Caco-2 (cell line): ENCODE measurements at regions of chr6 and their contacts with region 1.

Region 1: GRCh38 chr6:90302322-90302721 is 5.7 kb upstream of the BACH2 start:
- DNase-seq: no peak
- H3K4me3 ChIP-seq: no peak overlapping the region
- H3K4me3 Mint-ChIP-seq: no peak overlapping the region
- H3K27ac Mint-ChIP-seq: no peak overlapping the region
- H3K4me1 ChIP-seq: no peaks in the 10 kb centered on the region
- H3K4me1 Mint-ChIP-seq: peaks cover 10% of the 10 kb centered on the region
- H3K27me3 ChIP-seq: no peaks in the 10 kb centered on the region; the same call in none of the 2 replicates
- H3K27me3 Mint-ChIP-seq: peaks cover 27% of the 10 kb centered on the region
- CTCF ChIP-seq: peak in 1 of 2 experiments; percentile 47

Region 2: GRCh38 chr6:89970609-89971337 is 331.5 kb before region 1 on chr6:
- CTCF ChIA-PET with region 1: no interaction called
- POLR2A ChIA-PET with region 1: no interaction called
- intact Hi-C with region 1: loop called (anchors 1 kb)
- DNase-seq: peak in 1 of 2 experiments; percentile 54
- H3K4me3 ChIP-seq: no peak overlapping the region
- H3K4me3 Mint-ChIP-seq: no peak overlapping the region
- H3K27ac Mint-ChIP-seq: no peak overlapping the region
- H3K4me1 ChIP-seq: no peaks in the 10 kb centered on the region
- H3K4me1 Mint-ChIP-seq: no peaks in the 10 kb centered on the region
- H3K27me3 ChIP-seq: no peaks in the 10 kb centered on the region
- H3K27me3 Mint-ChIP-seq: peaks cover 13% of the 10 kb centered on the region
- CTCF ChIP-seq: peak; percentile 33 to 59

Region 3: GRCh38 chr6:90285611-90286381 is 16.5 kb before region 1 on chr6:
- CTCF ChIA-PET with region 1: no interaction called
- POLR2A ChIA-PET with region 1: no interaction called
- intact Hi-C with region 1: no loop called
- DNase-seq: peak; percentile 17 to 33
- H3K4me3 ChIP-seq: no peak overlapping the region
- H3K4me3 Mint-ChIP-seq: no peak overlapping the region
- H3K27ac Mint-ChIP-seq: no peak overlapping the region
- H3K4me1 ChIP-seq: 0 out of 2 replicates have a peak, but pooled peaks cover 3% of the 10 kb centered on the region
- H3K4me1 Mint-ChIP-seq: peaks cover 5% of the 10 kb centered on the region
- H3K27me3 ChIP-seq: no peaks in the 10 kb centered on the region; the same call in 1 of the 2 replicates
- H3K27me3 Mint-ChIP-seq: peaks cover 12% of the 10 kb centered on the region
- CTCF ChIP-seq: no peak